PC-3 (cell line): ENCODE measurements at regions of chr4 and their contacts with region 1.

Region 1: DNA sequence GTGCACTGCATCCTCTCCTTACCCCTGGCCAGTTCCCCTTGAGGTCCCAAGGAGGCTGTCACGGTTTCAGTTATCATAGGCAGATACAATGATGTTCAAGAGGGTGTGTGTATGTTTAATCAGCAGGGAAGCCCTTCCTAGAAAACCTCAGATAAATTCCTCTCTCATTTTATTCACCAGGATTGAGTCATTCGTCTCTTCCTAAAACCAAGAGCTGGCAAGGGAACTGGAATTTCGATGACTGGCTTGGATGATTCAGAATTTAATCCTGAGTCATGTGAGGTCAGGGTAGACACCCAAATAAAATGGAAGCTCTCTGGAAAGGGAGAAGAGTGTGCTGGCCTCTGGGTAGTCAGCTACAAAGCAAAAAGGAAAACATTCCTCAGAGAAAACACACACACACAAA is 106.2 kb upstream of the RAPGEF2 start:
- DNase-seq: peak; percentile 97
- ATAC-seq: peak; percentile 90
- H3K4me3 ChIP-seq: no peak overlapping the region
- H3K27ac ChIP-seq: peak overlapping the region; percentile 78
- H3K4me1 ChIP-seq: peaks cover 33% of the 10 kb centered on the region
- H3K27me3 ChIP-seq: no peaks in the 10 kb centered on the region
- CTCF ChIP-seq: no peak

Region 2: GRCh38 chr4:158090323-158090722 is 906.3 kb before region 1 on chr4:
- CTCF ChIA-PET with region 1: no interaction called
- POLR2A ChIA-PET with region 1: no interaction called
- intact Hi-C with region 1: no loop called
- DNase-seq: peak; percentile 49
- ATAC-seq: peak; percentile 44
- H3K4me3 ChIP-seq: peak overlapping the region; percentile 63
- H3K27ac ChIP-seq: peak overlapping the region; percentile 79
- H3K4me1 ChIP-seq: peaks cover 35% of the 10 kb centered on the region
- H3K27me3 ChIP-seq: no peaks in the 10 kb centered on the region
- CTCF ChIP-seq: no peak

Region 3: GRCh38 chr4:158817562-158818296 is 178.9 kb before region 1 on chr4:
- CTCF ChIA-PET with region 1: no interaction called
- POLR2A ChIA-PET with region 1: no interaction called
- intact Hi-C with region 1: no loop called
- DNase-seq: no peak
- ATAC-seq: no peak; the same call in 1 of the 2 replicates
- H3K4me3 ChIP-seq: no peak overlapping the region
- H3K27ac ChIP-seq: peak overlapping the region; percentile 49; the same call in 1 of the 2 replicates
- H3K4me1 ChIP-seq: peaks cover 24% of the 10 kb centered on the region
- H3K27me3 ChIP-seq: no peaks in the 10 kb centered on the region
- CTCF ChIP-seq: no peak

Region 4: GRCh38 chr4:158873795-158874401 is 122.8 kb before region 1 on chr4:
- CTCF ChIA-PET with region 1: no interaction called
- POLR2A ChIA-PET with region 1: no interaction called
- intact Hi-C with region 1: loop called (anchors 5 kb)
- DNase-seq: peak; percentile 88
- ATAC-seq: peak; percentile 96
- H3K4me3 ChIP-seq: no peak overlapping the region
- H3K27ac ChIP-seq: peak overlapping the region; percentile 39; the same call in 1 of the 2 replicates
- H3K4me1 ChIP-seq: peaks cover 18% of the 10 kb centered on the region
- H3K27me3 ChIP-seq: no peaks in the 10 kb centered on the region
- CTCF ChIP-seq: no peak

Region 5: GRCh38 chr4:158938220-158939044 is 58.2 kb before region 1 on chr4:
- CTCF ChIA-PET with region 1: no interaction called
- POLR2A ChIA-PET with region 1: no interaction called
- intact Hi-C with region 1: no loop called
- DNase-seq: no peak
- ATAC-seq: no peak
- H3K4me3 ChIP-seq: no peak overlapping the region
- H3K27ac ChIP-seq: no peak overlapping the region
- H3K4me1 ChIP-seq: no peaks in the 10 kb centered on the region
- H3K27me3 ChIP-seq: no peaks in the 10 kb centered on the region
- CTCF ChIP-seq: no peak

Region 6: DNA sequence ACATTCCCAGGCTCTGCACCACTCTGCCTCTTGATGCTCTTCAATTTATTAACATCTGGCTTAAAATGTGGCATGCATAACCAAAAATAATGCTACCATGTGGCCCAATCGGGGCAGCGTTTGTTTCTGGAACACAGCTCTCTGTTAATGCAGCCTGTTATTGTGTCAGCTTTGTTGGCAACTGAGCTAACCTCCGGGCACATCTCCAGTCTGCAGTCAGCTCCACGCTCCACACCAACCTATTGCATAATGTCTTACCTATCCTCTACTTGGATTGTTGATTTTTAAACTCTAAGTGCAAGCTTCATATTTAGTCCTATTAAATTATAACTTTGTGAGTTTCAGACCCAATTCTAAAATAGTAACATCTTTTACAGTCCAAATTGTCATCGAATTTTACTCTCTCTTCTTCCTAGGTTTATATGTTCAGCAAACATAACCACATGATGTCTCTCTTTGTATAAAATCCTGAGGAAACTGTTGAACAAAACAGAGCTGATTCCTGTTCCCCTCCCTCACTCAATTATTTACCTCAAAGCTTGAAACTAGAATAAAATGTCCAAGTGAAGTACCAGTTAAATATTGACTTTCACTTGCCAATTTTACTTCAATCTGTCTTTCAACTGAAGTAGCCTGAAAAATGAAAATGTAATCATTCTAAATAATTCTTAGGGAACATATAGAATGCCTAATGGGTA is 14.0 kb after region 1 on chr4:
- CTCF ChIA-PET with region 1: interaction called, 4 read pairs
- POLR2A ChIA-PET with region 1: interaction called, 10 read pairs
- intact Hi-C with region 1: no loop called
- DNase-seq: peak; percentile 68
- ATAC-seq: peak; percentile 69
- H3K4me3 ChIP-seq: no peak overlapping the region
- H3K27ac ChIP-seq: no peak overlapping the region
- H3K4me1 ChIP-seq: peaks cover 40% of the 10 kb centered on the region
- H3K27me3 ChIP-seq: no peaks in the 10 kb centered on the region
- CTCF ChIP-seq: no peak

Region 7: GRCh38 chr4:159024266-159024665 is 27.6 kb after region 1 on chr4:
- CTCF ChIA-PET with region 1: no interaction called
- POLR2A ChIA-PET with region 1: no interaction called
- intact Hi-C with region 1: no loop called
- DNase-seq: no peak
- ATAC-seq: no peak
- H3K4me3 ChIP-seq: no peak overlapping the region
- H3K27ac ChIP-seq: no peak overlapping the region
- H3K4me1 ChIP-seq: no peaks in the 10 kb centered on the region
- H3K27me3 ChIP-seq: no peaks in the 10 kb centered on the region
- CTCF ChIP-seq: no peak

Region 8: DNA sequence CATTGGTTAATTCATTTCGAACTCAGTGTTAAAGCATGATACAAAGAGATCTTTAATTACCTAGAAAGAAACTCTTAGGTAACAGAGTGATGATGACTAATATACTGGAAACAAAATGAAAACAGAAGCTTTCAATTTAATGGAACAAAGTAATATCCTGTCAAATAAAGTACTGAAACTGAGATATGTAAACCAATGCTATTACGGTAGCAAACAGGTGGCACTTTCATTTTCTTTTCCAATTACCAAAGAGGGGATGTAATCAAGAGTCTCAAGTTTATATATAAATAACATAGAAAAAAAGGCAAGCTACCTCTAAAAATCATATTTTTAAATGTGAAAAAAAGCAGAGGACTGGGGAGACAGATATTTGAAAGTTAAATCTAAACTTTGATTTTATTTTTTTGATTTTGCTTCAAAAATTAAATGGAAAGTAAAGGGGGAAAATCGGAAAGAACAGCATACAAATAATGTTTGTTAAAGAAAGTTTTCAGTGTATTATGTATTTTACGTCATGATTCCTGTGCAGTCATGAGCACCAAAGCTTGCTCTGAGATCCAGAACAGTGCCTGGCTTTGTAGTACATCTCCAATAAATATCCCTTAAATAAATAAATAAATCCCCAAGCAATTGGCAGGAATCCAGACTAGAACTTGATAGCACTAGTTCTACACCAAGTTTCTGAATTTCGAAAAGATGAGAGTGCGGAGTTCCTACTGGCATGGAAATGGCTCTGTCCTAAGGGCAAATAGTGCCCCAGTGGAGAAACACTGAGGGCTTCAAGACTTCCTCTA is 81.2 kb after region 1 on chr4:
- CTCF ChIA-PET with region 1: no interaction called
- POLR2A ChIA-PET with region 1: no interaction called
- intact Hi-C with region 1: loop called (anchors 5 kb)
- DNase-seq: peak; percentile 82
- ATAC-seq: peak; percentile 73
- H3K4me3 ChIP-seq: peak overlapping the region; percentile 49; the same call in 1 of the 2 replicates
- H3K27ac ChIP-seq: peak overlapping the region; percentile 64
- H3K4me1 ChIP-seq: peaks cover 16% of the 10 kb centered on the region
- H3K27me3 ChIP-seq: no peaks in the 10 kb centered on the region
- CTCF ChIP-seq: no peak

Region 9: DNA sequence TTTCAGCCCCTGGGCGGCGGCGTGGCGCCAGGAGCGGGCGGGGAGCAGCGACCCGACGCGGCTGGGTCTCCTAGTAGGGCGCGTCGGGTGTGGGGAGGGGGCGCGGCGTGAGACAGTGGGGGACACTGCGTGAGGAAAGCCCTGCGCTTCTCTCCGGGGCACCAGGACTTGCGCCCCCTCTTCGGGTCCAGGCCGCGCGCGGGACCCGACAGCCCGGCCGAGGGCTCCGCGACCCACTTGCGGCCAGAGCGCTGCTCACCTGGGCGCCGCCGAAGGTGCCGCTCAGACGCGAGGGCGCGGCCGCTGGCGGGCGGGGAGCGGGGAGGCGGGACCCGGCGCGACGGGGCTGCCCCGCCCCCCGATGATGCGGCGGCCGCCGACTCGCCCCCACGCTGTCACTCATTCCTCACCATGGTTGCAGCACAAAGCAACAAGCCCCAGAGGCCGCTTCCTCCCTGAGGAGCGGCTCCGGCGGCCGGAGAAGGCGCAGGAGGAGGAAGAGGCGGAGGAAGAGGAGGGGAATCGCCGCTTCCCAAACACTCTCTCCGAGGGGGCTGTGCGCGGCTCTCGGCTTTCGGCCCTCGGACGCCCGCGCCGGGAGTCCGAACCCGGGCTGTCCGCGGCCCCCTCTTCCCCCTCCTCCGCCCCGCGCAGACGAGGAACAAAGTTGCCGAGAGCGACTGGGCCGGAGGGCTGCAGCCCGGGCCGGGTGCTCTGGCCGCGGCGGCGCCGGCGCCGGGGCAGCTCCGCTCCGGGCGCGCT is 106.1 kb after region 1 on chr4 and contains the start of gene RAPGEF2:
- CTCF ChIA-PET with region 1: no interaction called
- POLR2A ChIA-PET with region 1: no interaction called
- intact Hi-C with region 1: loop called (anchors 1 kb)
- DNase-seq: peak; percentile 91
- ATAC-seq: peak; percentile 84
- H3K4me3 ChIP-seq: peak within 1 kb of the TSS; percentile 91
- H3K27ac ChIP-seq: 0 out of 2 replicates have a peak within 1 kb of the TSS, but pooled peaks have one; percentile 10
- H3K4me1 ChIP-seq: peaks cover 33% of the 10 kb centered on the region
- H3K27me3 ChIP-seq: no peaks in the 10 kb centered on the region
- CTCF ChIP-seq: no peak
- total RNA-seq, gene RAPGEF2: 21.2 and 21.7 TPM in 2 replicates